ENCODE measurements at regions of chr2 and their contacts with region 1.

Region 1: DNA sequence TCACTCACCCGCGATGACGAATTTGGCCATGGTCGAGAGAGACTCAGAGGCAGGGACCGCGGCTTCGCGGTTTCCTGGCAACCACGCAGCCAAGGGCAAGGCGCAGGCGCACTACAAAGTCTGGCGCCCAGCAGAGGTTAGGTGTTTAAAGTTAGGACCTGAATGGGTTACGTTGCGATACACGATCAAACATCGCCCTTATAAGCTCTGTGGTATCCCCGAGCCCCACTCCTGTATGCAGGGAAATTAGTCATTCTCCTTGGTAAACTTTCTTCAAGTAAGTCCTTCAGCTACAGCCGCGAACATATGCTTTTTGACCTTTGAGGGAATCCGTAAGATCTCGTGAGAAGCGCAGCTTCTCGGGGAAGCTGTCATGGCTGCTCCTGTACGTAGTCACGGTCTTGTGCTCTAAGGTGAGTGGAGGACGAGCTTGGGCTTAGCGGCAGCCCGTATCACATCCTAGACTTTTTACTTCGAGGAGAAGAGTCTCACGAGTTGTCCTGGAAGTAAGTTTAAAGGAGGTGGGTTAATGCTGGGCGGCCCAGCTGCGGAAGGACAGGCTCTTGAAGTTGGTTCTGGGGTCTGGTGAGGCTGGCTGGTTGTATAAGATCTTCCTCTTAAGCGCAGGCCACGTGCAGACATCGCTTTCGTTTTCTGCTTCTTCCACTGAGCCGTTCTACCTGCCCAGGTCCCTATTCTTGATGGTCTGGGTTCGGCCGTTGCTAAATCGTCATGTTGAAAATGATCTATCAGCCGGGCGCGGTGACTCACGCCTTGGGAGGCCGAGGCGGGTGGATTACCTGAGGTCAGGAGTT is at the starts of genes FASTKD2 and MDH1B:
- DNase-seq: peak; percentile 80
- H3K4me3 Mint-ChIP-seq: peak within 1 kb of the TSS; percentile 97
- H3K27ac Mint-ChIP-seq: peak within 1 kb of the TSS; percentile 98
- H3K4me1 Mint-ChIP-seq: peaks cover 30% of the 10 kb centered on the region
- H3K27me3 Mint-ChIP-seq: peaks cover 4% of the 10 kb centered on the region
- total RNA-seq, gene FASTKD2: 32.8 and 36.7 TPM in 2 replicates
- total RNA-seq, gene MDH1B: 0.20 and 0.36 TPM in 2 replicates

Region 2: GRCh38 chr2:206085742-206086445 is 679.6 kb before region 1 on chr2 and contains the start of gene INO80D:
- intact Hi-C with region 1: loop called (anchors 1 kb)
- DNase-seq: peak; percentile 72
- H3K4me3 Mint-ChIP-seq: peak within 1 kb of the TSS; percentile 99
- H3K27ac Mint-ChIP-seq: peak within 1 kb of the TSS; percentile 99
- H3K4me1 Mint-ChIP-seq: peaks cover 30% of the 10 kb centered on the region
- H3K27me3 Mint-ChIP-seq: peaks cover 2% of the 10 kb centered on the region
- total RNA-seq, gene INO80D: 29.4 and 30.3 TPM in 2 replicates

Region 3: DNA sequence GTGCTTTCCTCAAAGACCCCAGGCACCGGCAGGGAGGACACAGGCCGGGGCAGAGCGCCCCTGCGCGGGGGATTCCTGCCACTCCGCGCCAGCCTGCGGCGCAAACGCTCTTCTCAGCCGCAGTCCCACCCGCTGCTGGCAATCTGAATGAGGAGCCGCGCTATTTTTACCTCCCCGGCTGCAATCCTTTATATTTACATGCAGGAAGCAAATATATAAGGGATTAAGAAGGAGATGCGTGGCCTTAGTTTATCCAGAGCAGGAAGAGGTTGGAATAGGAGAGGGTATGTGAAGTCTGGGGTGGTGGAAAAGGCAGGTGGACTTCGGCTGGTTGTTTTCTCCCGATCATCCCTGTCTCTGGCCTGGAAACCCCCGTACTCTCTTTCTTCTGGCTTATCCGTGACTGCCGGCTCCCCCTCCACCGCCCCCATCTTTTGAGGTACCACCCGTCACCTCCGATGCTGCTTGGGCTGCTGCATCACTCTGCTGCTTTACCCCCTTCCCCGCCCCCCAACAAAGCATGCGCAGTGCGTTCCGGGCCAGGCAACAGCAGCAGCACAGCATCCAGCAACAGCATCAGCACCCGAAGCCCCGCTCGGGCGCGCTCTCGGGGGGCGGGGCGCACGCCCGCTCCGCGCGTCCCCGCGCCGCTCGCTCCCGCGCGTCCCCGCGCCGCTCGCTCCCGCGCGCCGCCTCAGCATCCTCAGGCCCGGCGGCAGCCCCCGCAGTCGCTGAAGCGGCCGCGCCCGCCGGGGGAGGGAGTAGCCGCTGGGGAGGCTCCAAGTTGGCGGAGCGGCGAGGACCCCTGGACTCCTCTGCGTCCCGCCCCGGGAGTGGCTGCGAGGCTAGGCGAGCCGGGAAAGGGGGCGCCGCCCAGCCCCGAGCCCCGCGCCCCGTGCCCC is 322.4 kb before region 1 on chr2 and contains the start of gene ADAM23:
- intact Hi-C with region 1: loop called (anchors 10 kb)
- DNase-seq: peak; percentile 26
- H3K4me3 Mint-ChIP-seq: peak within 1 kb of the TSS; percentile 77
- H3K27ac Mint-ChIP-seq: peak within 1 kb of the TSS; percentile 73
- H3K4me1 Mint-ChIP-seq: peaks cover 12% of the 10 kb centered on the region
- H3K27me3 Mint-ChIP-seq: peaks cover 61% of the 10 kb centered on the region
- total RNA-seq, gene ADAM23: 0.15 and 0.16 TPM in 2 replicates

Region 4: GRCh38 chr2:206780671-206781070 is 15.2 kb after region 1 on chr2:
- intact Hi-C with region 1: loop called (anchors 1 kb)
- DNase-seq: no peak
- H3K4me3 Mint-ChIP-seq: no peak overlapping the region
- H3K27ac Mint-ChIP-seq: no peak overlapping the region
- H3K4me1 Mint-ChIP-seq: no peaks in the 10 kb centered on the region
- H3K27me3 Mint-ChIP-seq: no peaks in the 10 kb centered on the region

Region 5: GRCh38 chr2:207334624-207335371 is 569.3 kb after region 1 on chr2:
- intact Hi-C with region 1: loop called (anchors 5 kb)
- DNase-seq: no peak
- H3K4me3 Mint-ChIP-seq: peak overlapping the region; percentile 28
- H3K27ac Mint-ChIP-seq: peak overlapping the region; percentile 88
- H3K4me1 Mint-ChIP-seq: peaks cover 82% of the 10 kb centered on the region
- H3K27me3 Mint-ChIP-seq: no peaks in the 10 kb centered on the region

Region 6: DNA sequence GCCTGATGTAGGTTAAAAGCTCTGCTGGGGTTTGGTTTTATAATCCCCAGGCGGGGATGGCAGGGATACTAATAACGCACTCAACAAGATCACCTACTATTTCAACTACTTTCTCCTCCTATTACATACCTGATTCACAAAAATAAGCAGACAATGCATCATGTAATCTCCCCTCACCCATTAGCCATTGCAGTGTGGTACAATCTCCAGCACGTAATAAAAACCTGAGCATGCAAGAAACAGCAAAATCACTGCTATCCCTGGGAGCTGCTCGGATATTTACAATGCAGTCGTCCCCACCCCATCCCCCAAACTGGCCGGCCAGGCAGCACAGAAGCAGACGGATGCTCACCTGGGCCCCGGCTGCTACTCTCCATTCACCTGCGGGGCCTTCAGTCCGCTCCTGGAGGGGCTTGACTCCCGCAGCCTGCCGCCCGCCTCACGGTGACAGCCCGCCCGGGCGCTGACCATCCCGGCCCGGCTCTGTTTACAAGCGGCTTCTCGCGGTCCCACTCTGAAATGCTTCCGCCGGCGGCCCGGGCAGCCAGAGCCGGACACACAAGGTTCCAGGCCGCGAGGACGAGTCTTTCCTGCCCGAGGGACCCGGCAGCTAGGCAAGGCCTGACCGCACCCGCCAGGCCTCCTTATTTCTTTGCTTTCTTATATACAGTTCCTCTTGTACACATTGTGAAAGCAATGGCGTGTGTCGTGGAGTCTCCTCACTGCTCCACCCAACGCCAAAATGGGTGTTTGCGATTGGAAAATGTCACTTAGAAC is 1259.8 kb after region 1 on chr2 and contains the start of gene PLEKHM3:
- intact Hi-C with region 1: loop called (anchors 2 kb)
- DNase-seq: peak; percentile 73
- H3K4me3 Mint-ChIP-seq: peak within 1 kb of the TSS; percentile 95
- H3K27ac Mint-ChIP-seq: peak within 1 kb of the TSS; percentile 79
- H3K4me1 Mint-ChIP-seq: peaks cover 17% of the 10 kb centered on the region
- H3K27me3 Mint-ChIP-seq: no peaks in the 10 kb centered on the region
- total RNA-seq, gene PLEKHM3: 6.4 and 7.3 TPM in 2 replicates

Measured in activated T-helper 1 cell treated with anti-CD3 and anti-CD28 coated beads, Interleukin-12 subunit alpha, Interleukin-12 subunit beta, Interleukin-2, Interleukin-4 antibody, amounts not matched to agents 30 ng/mL and 10 ng/mL and 1 ng/mL, durations not matched to agents 14 hours and 24 hours and 36 hours (primary cell).